ENCODE measurements at regions of chr5 and their contacts with region 1.

Region 1: GRCh38 chr5:96934708-96935558 is 947 bp upstream of the LNPEP start:
- DNase-seq: peak; percentile 85 to 97 (median 93)

Region 2: DNA sequence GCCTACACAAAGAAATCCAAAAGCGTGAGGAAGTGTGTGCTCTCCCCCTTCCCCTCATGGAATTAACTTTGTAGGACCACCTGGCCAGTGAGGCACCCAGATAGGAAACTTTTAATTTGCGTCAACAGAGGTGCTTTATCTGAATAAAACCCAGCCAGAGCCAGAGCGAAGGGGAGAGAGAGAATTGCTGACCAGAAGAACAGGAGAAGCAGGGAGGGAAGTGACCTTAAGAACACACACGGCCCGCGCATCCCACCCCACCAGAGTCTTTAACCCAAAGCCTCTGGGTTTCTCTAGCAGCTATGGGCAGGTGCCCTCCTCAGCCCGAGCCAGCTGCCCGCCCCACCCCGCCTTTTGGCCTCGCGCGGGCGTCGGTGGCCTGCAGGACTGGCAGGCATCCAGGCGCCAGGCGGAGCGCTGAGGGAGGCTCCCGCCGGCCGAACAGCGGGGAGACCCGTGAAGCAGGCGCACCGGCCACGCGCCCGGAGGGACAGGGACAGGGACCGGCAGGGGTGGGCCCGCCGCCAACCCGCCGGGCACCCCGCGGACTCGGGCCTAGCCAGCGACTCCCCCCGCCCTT is 127.8 kb before region 1 on chr5:
- intact Hi-C with region 1: loop called (anchors 2 kb)
- DNase-seq: peak in 41 of 42 donors; percentile 48 to 91 (median 82)

Region 3: GRCh38 chr5:96875791-96876291 is 59.1 kb before region 1 on chr5:
- intact Hi-C with region 1: loop called (anchors 2 kb)
- DNase-seq: peak in 1 of 42 donors; percentile 29

Region 4: DNA sequence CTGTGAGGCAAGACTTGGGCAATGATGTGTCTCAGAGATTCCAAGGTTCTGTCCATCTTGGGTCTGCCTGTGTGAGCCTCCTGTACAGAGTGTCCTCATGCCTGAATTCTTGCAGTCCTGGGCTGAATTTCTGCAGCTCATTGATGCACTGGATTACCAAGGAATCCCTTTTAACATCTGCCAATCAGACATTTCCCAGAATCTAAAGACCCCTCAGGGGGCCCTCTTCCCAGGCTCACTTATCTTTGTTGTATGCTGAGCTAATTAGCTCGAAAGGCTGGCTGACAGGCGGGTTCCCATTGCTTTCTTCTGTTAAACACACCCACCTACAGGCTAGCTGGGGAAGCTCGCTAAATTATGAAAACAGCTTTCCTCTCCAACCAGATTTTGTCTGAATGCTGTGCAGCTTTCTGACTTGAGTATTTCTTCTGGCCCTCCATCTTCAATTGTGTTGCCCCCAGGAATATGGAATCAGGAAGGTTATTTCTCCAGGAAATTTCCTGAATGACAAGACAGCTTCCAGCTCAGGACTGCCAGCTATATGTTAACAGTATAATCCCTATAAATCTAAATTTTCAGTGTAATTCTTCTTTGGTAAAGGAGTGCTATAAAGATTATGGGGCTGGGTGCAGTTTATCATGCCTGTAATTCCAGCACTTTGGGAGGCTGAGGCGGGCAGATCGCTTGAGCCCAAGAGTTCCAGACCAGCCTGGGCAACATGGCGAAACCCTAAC is 207.8 kb after region 1 on chr5 and contains the start of gene LIX1:
- intact Hi-C with region 1: loop called (anchors 5 kb)
- DNase-seq: peak; percentile 18 to 84 (median 64)